Naive thymus-derived CD4-positive, alpha-beta T cell (primary cell): ENCODE measurements at regions of chr12 and their contacts with region 1.

Region 1: DNA sequence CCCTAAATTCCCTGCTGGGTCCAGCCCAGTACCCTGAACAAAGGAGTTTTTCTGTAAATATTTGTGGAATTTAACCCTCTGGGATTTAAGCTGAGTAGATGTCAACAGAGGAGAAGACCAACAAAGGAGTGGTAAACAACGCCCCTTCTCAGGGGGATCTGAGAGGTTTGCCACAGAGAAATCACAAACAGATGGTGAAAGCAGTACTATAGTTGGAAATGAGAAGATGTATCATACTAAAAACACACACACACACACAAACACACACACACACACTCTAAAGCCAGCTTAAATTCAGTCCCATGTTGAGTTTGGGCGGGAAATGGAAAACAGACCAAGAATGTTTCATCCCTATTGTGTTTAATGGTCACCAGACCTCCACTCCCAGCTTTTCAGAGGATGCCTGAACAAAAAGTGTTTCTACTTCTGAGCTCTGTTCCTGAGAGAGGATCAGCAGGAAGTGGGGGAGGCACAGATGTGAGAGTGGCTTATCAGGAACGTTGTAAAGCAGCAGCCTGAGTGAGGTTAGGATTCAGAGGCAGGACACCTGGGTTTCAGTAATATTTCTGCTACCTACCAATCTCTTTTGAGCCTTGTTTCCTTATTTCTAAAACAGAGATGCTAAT is 3.2 kb downstream of the BIN2 start:
- DNase-seq: peak in 3 of 9 donors; percentile 20 to 34 (median 21)
- ATAC-seq: no peak
- H3K4me3 ChIP-seq: peak overlapping the region; percentile 58
- H3K4me3 Mint-ChIP-seq: peak overlapping the region; percentile 69 to 99 (median 94)
- H3K27ac ChIP-seq: peak overlapping the region; percentile 95
- H3K27ac Mint-ChIP-seq: peak overlapping the region; percentile 89 to 99 (median 96)
- H3K4me1 ChIP-seq: peaks cover 58 to 65% of the 10 kb centered on the region in 2 donors
- H3K4me1 Mint-ChIP-seq: peaks cover 56 to 90% (median 72%) of the 10 kb centered on the region in 7 donors
- H3K27me3 ChIP-seq: no peaks in the 10 kb centered on the region
- H3K27me3 Mint-ChIP-seq: no peaks in the 10 kb centered on the region

Region 2: GRCh38 chr12:51270067-51270970 is 50.5 kb before region 1 on chr12 and contains the start of gene SMAGP:
- CTCF ChIA-PET with region 1: interaction called, 6 read pairs
- POLR2A ChIA-PET with region 1: interaction called, 19 read pairs
- intact Hi-C with region 1: loop called (anchors 1 to 5 kb)
- DNase-seq: peak; percentile 13 to 62 (median 36)
- ATAC-seq: peak; percentile 68
- H3K4me3 ChIP-seq: peak within 1 kb of the TSS; percentile 57
- H3K4me3 Mint-ChIP-seq: peak within 1 kb of the TSS; percentile 90 to 98 (median 94)
- H3K27ac ChIP-seq: peak within 1 kb of the TSS; percentile 62
- H3K27ac Mint-ChIP-seq: peak within 1 kb of the TSS; percentile 55 to 96 (median 90)
- H3K4me1 ChIP-seq: peaks cover 5 to 20% of the 10 kb centered on the region in 2 donors
- H3K4me1 Mint-ChIP-seq: peaks cover 19 to 29% (median 24%) of the 10 kb centered on the region in 7 donors
- H3K27me3 ChIP-seq: no peaks in the 10 kb centered on the region
- H3K27me3 Mint-ChIP-seq: peaks cover 0 to 34% (median 0%) of the 10 kb centered on the region in 5 donors
- total RNA-seq, gene SMAGP: 1.5 to 7.4 (median 4.2) TPM

Region 3: DNA sequence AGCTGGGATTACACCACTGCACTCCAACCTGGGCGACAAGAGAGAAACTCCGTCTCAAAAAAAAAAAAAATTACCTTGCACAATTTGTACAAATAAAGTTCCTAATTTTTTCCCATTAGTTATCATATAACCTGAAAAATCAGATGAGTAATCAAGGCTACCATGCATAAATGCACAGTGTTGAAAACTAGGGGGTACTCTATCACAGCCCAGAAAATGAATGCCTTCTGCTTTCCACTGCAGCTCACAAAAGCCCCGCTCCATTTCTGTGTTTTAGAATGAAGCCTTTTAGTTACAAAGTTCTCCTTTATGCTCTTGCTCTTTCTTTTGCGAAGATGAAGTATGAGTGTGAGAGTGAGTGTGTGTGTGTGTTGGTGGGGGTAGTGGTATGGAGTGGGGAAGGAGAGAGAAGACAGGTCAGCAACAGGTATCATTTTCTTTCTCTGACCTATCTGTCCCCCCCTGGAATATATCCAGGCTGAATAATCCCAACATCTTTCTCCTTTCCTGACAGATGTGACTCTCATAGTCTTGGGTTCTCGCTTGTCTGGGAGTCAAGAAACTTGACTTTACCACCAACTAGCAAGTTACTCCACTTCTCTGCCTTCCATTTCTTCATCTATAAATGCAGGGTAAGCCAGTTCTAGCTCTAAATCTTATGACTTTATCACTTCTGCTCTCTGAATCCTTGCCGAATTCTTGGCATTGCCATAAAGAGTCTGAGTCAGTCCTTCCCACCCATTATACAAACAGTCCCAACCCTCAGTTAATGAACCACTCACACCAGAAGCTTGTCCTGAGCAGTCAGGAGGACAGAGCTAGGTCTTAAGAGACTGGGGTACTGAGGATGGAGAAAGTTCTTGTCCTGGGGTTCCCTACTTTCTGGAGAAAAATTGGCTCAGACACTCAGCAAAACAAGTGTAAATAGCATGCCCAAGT is 12.9 kb before region 1 on chr12:
- CTCF ChIA-PET with region 1: interaction called, 7 read pairs
- POLR2A ChIA-PET with region 1: interaction called, 44 read pairs
- intact Hi-C with region 1: loop called in 1 of 2 experiments (anchors 1 kb)
- DNase-seq: peak in 3 of 9 donors; percentile 24 to 45 (median 33)
- ATAC-seq: no peak
- H3K4me3 ChIP-seq: no peak overlapping the region
- H3K4me3 Mint-ChIP-seq: peak overlapping the region in 8 of 10 donors; percentile 22 to 60 (median 50)
- H3K27ac ChIP-seq: peak overlapping the region; percentile 23
- H3K27ac Mint-ChIP-seq: peak overlapping the region; percentile 65 to 91 (median 86)
- H3K4me1 ChIP-seq: peaks cover 18 to 31% of the 10 kb centered on the region in 2 donors
- H3K4me1 Mint-ChIP-seq: peaks cover 33 to 82% (median 63%) of the 10 kb centered on the region in 7 donors
- H3K27me3 ChIP-seq: no peaks in the 10 kb centered on the region
- H3K27me3 Mint-ChIP-seq: no peaks in the 10 kb centered on the region

Region 4: GRCh38 chr12:51368640-51369517 is 48.1 kb after region 1 on chr12:
- CTCF ChIA-PET with region 1: no interaction called
- POLR2A ChIA-PET with region 1: interaction called, 9 read pairs
- intact Hi-C with region 1: loop called in 1 of 2 experiments (anchors 2 kb)
- DNase-seq: peak; percentile 53 to 96 (median 95)
- ATAC-seq: peak; percentile 96
- H3K4me3 ChIP-seq: peak overlapping the region; percentile 57
- H3K4me3 Mint-ChIP-seq: peak overlapping the region; percentile 62 to 89 (median 80)
- H3K27ac ChIP-seq: peak overlapping the region; percentile 73
- H3K27ac Mint-ChIP-seq: peak overlapping the region; percentile 6 to 96 (median 91)
- H3K4me1 ChIP-seq: peaks cover 24 to 35% of the 10 kb centered on the region in 2 donors
- H3K4me1 Mint-ChIP-seq: peaks cover 38 to 72% (median 54%) of the 10 kb centered on the region in 7 donors
- H3K27me3 ChIP-seq: no peaks in the 10 kb centered on the region
- H3K27me3 Mint-ChIP-seq: peaks cover 0 to 5% (median 0%) of the 10 kb centered on the region in 5 donors